ENCODE measurements at regions of chr19 and their contacts with region 1.

Region 1: DNA sequence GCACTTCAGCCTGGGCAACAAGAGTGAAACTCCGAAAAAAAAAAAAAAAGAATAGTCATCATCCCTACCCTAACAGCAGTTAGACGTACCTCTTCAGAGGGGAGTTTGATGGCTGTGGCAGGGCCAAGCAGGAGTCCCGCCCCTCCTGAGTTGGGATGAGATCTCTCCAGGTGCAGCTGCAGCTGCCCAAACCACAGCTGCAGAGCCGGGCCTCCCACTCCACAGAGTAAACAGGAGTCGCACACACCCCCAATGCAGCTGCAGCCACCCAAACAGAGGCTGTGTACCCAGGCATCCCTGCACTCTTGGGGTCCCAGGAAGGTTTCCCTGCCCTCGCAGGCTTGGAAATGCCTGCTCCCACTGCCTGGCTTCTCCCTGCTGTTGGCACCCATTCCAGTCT is 17.4 kb upstream of the MLLT1 start:
- DNase-seq: no peak
- H3K4me3 ChIP-seq: no peak overlapping the region
- H3K27ac ChIP-seq: no peak overlapping the region
- H3K4me1 ChIP-seq: no peaks in the 10 kb centered on the region
- H3K27me3 ChIP-seq: peaks cover 2% of the 10 kb centered on the region
- CTCF ChIP-seq: no peak

Region 2: DNA sequence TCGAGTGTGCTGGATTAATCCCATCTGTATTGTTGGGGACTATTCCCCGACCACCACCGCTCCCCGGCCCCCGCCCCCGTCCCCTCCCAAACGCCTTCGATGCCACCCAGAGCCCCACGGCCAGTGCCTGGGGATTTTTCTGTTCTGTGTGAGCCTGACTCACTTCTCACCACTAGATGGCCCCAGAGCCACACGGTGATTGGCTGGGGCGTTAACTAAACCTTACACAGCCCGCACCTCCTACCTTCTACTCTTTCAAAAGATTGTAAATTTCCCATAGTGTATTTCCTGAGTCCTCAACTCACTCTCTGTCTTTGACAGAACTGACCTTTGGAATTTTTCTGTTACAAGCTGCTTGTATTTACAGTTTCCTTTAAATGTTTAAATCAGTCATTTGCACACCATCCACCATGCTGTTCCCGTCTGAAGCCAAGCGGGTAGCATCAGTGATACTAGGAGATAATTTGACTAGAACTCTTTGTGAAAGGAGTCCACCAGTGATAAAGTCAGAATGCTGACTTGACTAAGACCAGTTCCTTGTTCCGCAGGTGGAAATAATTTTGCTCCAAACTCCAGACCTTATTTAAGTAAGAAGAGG is 248.3 kb before region 1 on chr19:
- CTCF ChIA-PET with region 1: no interaction called
- dilution Hi-C with region 1: no loop called
- in situ Hi-C with region 1: no loop called
- intact Hi-C with region 1: loop called (anchors 2 kb)
- DNase-seq: peak; percentile 65
- H3K4me3 ChIP-seq: no peak overlapping the region
- H3K27ac ChIP-seq: no peak overlapping the region
- H3K4me1 ChIP-seq: no peaks in the 10 kb centered on the region
- H3K27me3 ChIP-seq: no peaks in the 10 kb centered on the region
- CTCF ChIP-seq: peak; percentile 87 to 91

Region 3: DNA sequence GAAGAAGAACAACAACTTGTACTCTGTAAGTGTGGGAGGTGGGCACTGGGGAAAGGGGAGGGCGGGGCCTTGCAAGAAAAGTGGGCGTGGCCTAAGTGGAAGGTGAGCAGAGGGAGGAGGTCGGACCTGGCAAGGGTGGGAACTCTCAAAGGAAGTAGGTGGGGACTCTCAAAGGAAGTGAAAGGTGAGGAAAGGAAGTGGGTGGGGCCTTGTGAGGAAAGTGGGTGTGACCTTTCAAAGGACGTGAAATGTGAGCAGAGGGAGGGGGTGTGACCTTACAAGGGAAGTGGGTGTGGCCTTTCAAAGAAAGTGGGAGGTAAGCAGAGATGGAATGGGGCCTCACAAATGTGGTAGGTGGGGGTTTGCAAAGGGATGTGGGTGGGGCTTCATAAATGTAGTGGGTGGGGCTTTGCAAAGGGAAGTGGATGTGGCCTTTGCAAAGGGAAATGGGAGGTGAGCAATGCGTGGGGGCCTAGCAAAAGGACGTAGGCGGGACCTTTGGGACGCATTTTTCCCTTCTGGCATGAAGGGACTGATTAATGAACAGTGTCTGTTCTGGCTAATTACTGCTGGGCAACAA is 135.8 kb before region 1 on chr19:
- CTCF ChIA-PET with region 1: no interaction called
- dilution Hi-C with region 1: no loop called
- in situ Hi-C with region 1: loop called in 1 of 2 experiments (anchors 25 kb)
- intact Hi-C with region 1: loop called (anchors 1 kb)
- DNase-seq: peak; percentile 9
- H3K4me3 ChIP-seq: no peak overlapping the region
- H3K27ac ChIP-seq: no peak overlapping the region
- H3K4me1 ChIP-seq: no peaks in the 10 kb centered on the region
- H3K27me3 ChIP-seq: no peaks in the 10 kb centered on the region
- CTCF ChIP-seq: no peak

Region 4: GRCh38 chr19:6218491-6219162 is 78.6 kb before region 1 on chr19:
- CTCF ChIA-PET with region 1: no interaction called
- dilution Hi-C with region 1: no loop called
- in situ Hi-C with region 1: no loop called
- intact Hi-C with region 1: loop called (anchors 1 kb)
- DNase-seq: peak; percentile 58
- H3K4me3 ChIP-seq: no peak overlapping the region
- H3K27ac ChIP-seq: no peak overlapping the region
- H3K4me1 ChIP-seq: peaks cover 21% of the 10 kb centered on the region
- H3K27me3 ChIP-seq: no peaks in the 10 kb centered on the region
- CTCF ChIP-seq: peak; percentile 92 to 96

Measured in mammary epithelial cell (primary cell).